CD4-positive, alpha-beta memory T cell (primary cell): ENCODE measurements at regions of chr2 and their contacts with region 1.

Region 1: GRCh38 chr2:176096986-176097819 is 2.4 kb upstream of the HOXD12 start:
- DNase-seq: peak in 4 of 5 donors; percentile 56 to 61 (median 56)
- H3K4me3 ChIP-seq: peak overlapping the region; percentile 1 to 54
- H3K4me3 Mint-ChIP-seq: peak overlapping the region; percentile 51 to 87 (median 82)
- H3K27ac ChIP-seq: no peak overlapping the region
- H3K27ac Mint-ChIP-seq: peak overlapping the region in 3 of 7 donors; percentile 3 to 83 (median 42)
- H3K4me1 ChIP-seq: peaks cover 27% of the 10 kb centered on the region
- H3K4me1 Mint-ChIP-seq: peaks cover 12 to 39% (median 28%) of the 10 kb centered on the region in 4 donors
- H3K27me3 ChIP-seq: peaks cover 78% of the 10 kb centered on the region
- H3K27me3 Mint-ChIP-seq: peaks cover 77 to 78% of the 10 kb centered on the region in 2 donors

Region 2: DNA sequence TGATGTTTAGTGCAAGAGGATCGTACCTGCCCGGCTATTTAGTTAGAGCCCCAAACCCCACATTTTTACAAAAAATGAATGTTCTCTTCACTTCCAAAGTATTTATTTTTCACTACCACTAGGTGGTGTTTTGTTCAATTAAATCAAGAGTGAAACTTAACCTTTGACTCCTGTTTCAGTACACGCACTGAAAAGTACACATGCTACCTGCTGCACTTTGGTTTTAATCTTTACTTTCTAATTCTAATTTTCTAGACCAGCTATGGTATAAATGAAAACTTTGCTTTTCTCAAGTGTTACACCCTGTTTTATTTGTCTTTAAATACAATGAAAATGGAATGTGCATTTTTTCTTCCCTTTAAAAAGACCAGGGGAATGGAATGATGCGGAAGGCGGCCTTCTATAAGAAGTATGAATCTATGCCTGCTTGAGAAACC is 1060.6 kb before region 1 on chr2:
- CTCF ChIA-PET with region 1: interaction called, 3 read pairs
- POLR2A ChIA-PET with region 1: no interaction called
- intact Hi-C with region 1: loop called (anchors 2 kb)
- DNase-seq: peak in 4 of 5 donors; percentile 38 to 49 (median 47)
- H3K4me3 ChIP-seq: no peak overlapping the region
- H3K4me3 Mint-ChIP-seq: peak overlapping the region in 7 of 8 donors; percentile 61 to 79 (median 69)
- H3K27ac ChIP-seq: no peak overlapping the region
- H3K27ac Mint-ChIP-seq: peak overlapping the region; percentile 10 to 87 (median 72)
- H3K4me1 ChIP-seq: peaks cover 4% of the 10 kb centered on the region
- H3K4me1 Mint-ChIP-seq: peaks cover 4 to 9% (median 7%) of the 10 kb centered on the region in 4 donors
- H3K27me3 ChIP-seq: no peaks in the 10 kb centered on the region
- H3K27me3 Mint-ChIP-seq: no peaks in the 10 kb centered on the region

Region 3: DNA sequence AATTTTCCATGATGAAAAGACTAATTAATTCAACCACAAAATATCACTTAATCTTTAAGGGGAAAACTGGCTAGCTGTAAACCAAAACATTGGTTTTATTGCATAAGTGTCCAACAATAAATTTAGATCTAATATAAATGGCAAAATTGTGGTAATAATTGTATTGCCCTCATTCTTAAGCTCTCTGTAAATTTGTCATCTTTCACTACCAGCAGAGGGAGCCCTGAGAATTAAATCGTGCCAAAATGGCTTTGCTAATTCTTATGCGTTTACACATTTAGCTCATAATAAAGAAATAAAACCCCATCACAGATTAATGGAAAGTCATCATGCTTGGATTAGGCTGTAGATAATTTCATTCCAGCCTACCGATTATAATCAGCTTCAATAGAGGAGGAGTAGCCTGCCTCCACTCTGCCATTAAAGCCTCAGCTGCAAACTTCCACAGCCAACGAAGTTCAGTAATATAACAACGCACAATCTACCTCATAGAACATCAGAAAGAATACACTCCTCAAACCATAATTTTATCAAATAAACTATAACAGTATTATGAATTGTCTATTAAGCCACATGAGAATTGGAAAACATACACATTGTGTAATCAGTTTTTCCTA is 845.7 kb before region 1 on chr2:
- CTCF ChIA-PET with region 1: interaction called, 30 read pairs
- POLR2A ChIA-PET with region 1: no interaction called
- intact Hi-C with region 1: no loop called
- DNase-seq: peak in 3 of 5 donors; percentile 8 to 27 (median 10)
- H3K4me3 ChIP-seq: no peak overlapping the region
- H3K4me3 Mint-ChIP-seq: no peak overlapping the region
- H3K27ac ChIP-seq: no peak overlapping the region
- H3K27ac Mint-ChIP-seq: no peak overlapping the region
- H3K4me1 ChIP-seq: no peaks in the 10 kb centered on the region
- H3K4me1 Mint-ChIP-seq: peaks cover 0 to 4% (median 2%) of the 10 kb centered on the region in 4 donors
- H3K27me3 ChIP-seq: no peaks in the 10 kb centered on the region
- H3K27me3 Mint-ChIP-seq: peaks cover 10 to 11% of the 10 kb centered on the region in 2 donors

Region 4: DNA sequence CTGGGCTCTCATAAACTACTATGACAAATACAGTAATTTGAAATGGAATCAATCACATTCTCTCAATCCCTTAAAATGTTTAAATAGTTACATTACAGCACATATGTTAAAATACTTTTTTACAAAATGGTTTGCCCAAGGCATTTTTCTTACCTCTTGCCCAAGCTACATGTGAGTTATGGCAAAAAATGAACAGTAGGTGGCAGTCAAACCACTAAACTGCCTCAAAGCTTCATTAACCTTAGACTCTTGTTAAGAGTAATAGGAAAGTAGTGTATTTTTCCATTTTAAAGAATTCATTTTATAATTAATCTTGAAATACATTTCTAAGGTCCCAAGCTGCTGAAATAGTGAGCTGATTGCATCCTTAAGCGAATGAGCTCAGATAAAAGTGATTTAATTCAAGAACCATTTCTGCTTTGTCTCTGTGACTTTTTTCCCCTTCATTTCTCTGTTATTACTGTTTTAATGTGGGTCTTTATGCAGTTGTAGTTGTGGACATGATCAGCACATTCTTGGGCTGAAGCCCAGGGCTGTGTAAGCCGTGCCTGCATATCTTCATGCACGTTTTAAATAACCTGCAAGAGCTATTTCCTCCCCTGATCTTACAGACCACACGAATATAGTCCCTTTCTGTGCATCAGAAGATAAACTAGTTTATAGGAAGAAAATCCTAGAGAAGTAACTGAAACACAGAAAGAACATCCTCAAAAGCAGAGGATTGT is 406.9 kb before region 1 on chr2:
- CTCF ChIA-PET with region 1: interaction called, 111 read pairs
- POLR2A ChIA-PET with region 1: no interaction called
- intact Hi-C with region 1: loop called (anchors 1 kb)
- DNase-seq: peak in 4 of 5 donors; percentile 23 to 48 (median 26)
- H3K4me3 ChIP-seq: no peak overlapping the region
- H3K4me3 Mint-ChIP-seq: no peak overlapping the region
- H3K27ac ChIP-seq: no peak overlapping the region
- H3K27ac Mint-ChIP-seq: peak overlapping the region in 1 of 7 donors; percentile 19
- H3K4me1 ChIP-seq: no peaks in the 10 kb centered on the region
- H3K4me1 Mint-ChIP-seq: no peaks in the 10 kb centered on the region
- H3K27me3 ChIP-seq: no peaks in the 10 kb centered on the region
- H3K27me3 Mint-ChIP-seq: peaks cover 14 to 15% of the 10 kb centered on the region in 2 donors

Region 5: DNA sequence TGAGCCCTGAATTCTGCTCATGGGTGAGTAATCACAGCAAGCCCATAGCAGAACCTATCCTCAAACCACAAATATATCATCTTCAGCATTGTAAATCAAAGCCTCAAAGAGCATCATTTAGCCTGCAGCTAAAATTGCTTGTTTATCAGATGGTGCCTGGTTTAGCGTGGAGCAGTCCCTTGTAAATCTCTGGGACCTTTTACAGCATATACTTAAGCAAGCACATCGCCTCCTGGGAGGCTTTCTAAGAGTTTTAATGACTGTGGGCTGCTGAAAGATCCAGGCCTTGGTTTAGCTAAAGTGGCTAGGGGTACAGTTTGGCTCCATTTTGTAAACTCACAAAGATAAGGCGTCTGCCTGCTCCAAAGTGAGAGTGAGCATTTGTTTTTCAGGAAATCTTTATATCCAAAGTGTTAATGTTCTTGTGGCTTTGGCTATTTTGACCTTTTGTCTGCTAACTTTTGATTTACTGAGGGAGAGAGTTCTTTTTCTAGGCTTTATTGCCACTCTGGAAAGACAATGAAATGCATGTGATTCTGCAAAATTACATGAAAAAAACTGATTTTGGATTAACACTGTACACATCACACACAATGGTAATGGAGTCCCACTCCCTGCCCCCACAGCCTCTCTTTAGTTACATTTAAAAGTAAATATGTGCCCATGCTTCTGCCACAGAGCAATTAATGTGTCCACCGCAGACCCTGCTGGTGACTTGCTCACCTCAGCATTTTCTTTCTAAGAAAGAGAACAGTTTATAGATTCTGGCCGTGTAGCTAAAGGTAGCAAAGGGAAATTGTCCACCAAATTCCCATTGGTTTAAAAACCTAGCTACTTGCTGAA is 290.0 kb before region 1 on chr2:
- CTCF ChIA-PET with region 1: no interaction called
- POLR2A ChIA-PET with region 1: no interaction called
- intact Hi-C with region 1: no loop called
- DNase-seq: no peak
- H3K4me3 ChIP-seq: no peak overlapping the region
- H3K4me3 Mint-ChIP-seq: no peak overlapping the region
- H3K27ac ChIP-seq: no peak overlapping the region
- H3K27ac Mint-ChIP-seq: no peak overlapping the region
- H3K4me1 ChIP-seq: no peaks in the 10 kb centered on the region
- H3K4me1 Mint-ChIP-seq: no peaks in the 10 kb centered on the region
- H3K27me3 ChIP-seq: no peaks in the 10 kb centered on the region
- H3K27me3 Mint-ChIP-seq: peaks cover 0 to 7% of the 10 kb centered on the region in 2 donors

Region 6: GRCh38 chr2:175964195-175964594 is 133.0 kb before region 1 on chr2:
- CTCF ChIA-PET with region 1: no interaction called
- POLR2A ChIA-PET with region 1: no interaction called
- intact Hi-C with region 1: no loop called
- DNase-seq: no peak
- H3K4me3 ChIP-seq: no peak overlapping the region
- H3K4me3 Mint-ChIP-seq: no peak overlapping the region
- H3K27ac ChIP-seq: no peak overlapping the region
- H3K27ac Mint-ChIP-seq: no peak overlapping the region
- H3K4me1 ChIP-seq: no peaks in the 10 kb centered on the region
- H3K4me1 Mint-ChIP-seq: peaks cover 0 to 10% (median 4%) of the 10 kb centered on the region in 4 donors
- H3K27me3 ChIP-seq: no peaks in the 10 kb centered on the region
- H3K27me3 Mint-ChIP-seq: no peaks in the 10 kb centered on the region

Region 7: GRCh38 chr2:176079831-176080539 is 17.2 kb before region 1 on chr2:
- CTCF ChIA-PET with region 1: interaction called, 7 read pairs
- POLR2A ChIA-PET with region 1: interaction called, 3 read pairs
- intact Hi-C with region 1: loop called (anchors 2 kb)
- DNase-seq: peak in 1 of 5 donors; percentile 24
- H3K4me3 ChIP-seq: no peak overlapping the region
- H3K4me3 Mint-ChIP-seq: peak overlapping the region in 6 of 8 donors; percentile 64 to 82 (median 72)
- H3K27ac ChIP-seq: no peak overlapping the region
- H3K27ac Mint-ChIP-seq: peak overlapping the region in 4 of 7 donors; percentile 90 to 95 (median 92)
- H3K4me1 ChIP-seq: no peaks in the 10 kb centered on the region
- H3K4me1 Mint-ChIP-seq: peaks cover 3 to 24% (median 9%) of the 10 kb centered on the region in 4 donors
- H3K27me3 ChIP-seq: peaks cover 85% of the 10 kb centered on the region
- H3K27me3 Mint-ChIP-seq: peaks cover 62 to 63% of the 10 kb centered on the region in 2 donors